ENCODE measurements at regions of chr6 and their contacts with region 1.

Region 1: DNA sequence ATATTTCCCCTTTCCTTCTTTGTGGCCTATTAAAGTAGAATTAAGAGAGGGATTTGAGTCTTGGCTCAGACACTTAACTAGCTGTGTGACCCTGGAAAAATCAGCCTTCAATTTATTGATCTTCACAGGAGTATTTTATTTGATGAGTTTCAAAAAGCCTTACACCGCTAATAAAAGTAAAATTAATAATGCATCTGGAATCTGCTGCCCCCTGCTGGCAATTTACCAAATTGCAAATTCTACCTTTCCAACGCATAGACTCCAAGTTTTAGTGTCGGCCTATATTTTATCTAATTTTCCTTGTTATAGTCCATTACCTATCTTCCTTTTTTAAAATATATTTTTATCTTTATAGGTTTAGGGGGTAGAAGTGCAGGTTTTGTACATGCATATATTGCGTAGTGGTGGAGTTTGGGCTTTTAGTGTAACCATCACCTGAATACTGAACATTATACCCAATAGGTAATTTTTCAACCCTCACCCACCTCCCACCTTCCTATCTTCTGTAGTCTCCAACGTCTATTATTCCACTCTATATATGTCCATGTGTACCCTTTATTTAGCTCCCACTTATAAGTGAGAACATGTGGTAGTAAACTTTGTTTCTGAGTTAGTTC is 46.3 kb downstream of the GOPC start:
- DNase-seq: peak; percentile 32
- H3K4me3 ChIP-seq: no peak overlapping the region
- H3K27ac ChIP-seq: no peak overlapping the region
- H3K4me1 ChIP-seq: no peaks in the 10 kb centered on the region
- CTCF ChIP-seq: peak; percentile 95

Region 2: GRCh38 chr6:117290173-117290846 is 265.7 kb before region 1 on chr6:
- CTCF ChIA-PET with region 1: no interaction called
- POLR2A ChIA-PET with region 1: no interaction called
- intact Hi-C with region 1: no loop called
- DNase-seq: no peak
- H3K4me3 ChIP-seq: no peak overlapping the region
- H3K27ac ChIP-seq: no peak overlapping the region
- H3K4me1 ChIP-seq: no peaks in the 10 kb centered on the region
- CTCF ChIP-seq: no peak

Region 3: DNA sequence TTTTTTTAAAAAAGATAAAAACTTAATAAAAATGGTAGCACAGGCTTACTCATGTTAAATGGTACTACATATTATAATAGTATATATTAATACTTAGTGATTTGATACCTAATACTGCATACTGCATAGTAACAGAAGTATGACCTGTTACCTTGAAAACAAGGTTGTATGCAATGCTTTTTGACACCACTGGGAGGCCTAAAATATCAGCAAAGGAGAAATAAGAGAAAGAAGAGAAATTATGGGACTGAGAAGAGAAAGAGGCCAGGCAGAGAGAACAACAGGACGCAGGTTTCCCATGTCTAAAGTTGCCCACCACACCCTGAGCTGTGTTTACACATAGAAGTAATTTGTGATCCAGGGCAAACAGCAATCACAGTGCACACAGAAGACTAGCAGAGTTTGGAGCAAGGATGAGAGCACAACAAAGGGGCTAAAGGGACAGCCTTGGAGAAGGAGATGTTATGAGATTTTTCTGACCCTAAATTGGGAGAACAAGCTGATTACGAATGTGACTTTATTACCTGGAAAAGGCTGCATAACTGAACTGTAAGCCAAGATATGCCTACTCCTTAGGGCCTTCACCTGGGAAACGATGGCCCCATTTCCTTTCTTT is 203.4 kb before region 1 on chr6:
- CTCF ChIA-PET with region 1: no interaction called
- POLR2A ChIA-PET with region 1: interaction called, 3 read pairs
- intact Hi-C with region 1: loop called (anchors 5 kb)
- DNase-seq: peak; percentile 1
- H3K4me3 ChIP-seq: no peak overlapping the region
- H3K27ac ChIP-seq: no peak overlapping the region
- H3K4me1 ChIP-seq: no peaks in the 10 kb centered on the region
- CTCF ChIP-seq: peak; percentile 56

Measured in OCI-LY7 (cell line).